Tibial artery (tissue), 4 donors: ENCODE measurements at regions of chr14 and their contacts with region 1.

Region 1: DNA sequence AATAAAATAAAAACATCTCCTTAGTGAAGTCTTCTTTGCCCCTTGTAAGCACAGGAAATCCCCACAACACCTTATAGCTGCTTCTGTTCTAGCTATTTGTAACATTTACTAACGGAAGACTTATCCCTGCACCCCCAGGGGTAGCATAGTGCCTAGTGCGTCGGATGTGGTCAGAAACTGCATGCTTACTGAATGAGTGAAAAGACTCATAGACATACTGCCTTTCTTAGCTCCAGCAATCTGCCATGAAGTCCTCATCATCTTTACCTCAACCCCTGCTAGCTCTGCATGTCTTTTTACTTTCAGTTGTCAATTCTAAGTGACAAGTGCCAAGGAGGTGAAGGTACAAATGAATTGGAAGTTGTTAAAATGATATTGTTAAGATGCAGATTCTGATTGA is 12.9 kb downstream of the RIOX1 start:
- DNase-seq: no peak
- H3K4me3 ChIP-seq: no peak overlapping the region
- H3K27ac ChIP-seq: no peak overlapping the region
- H3K4me1 ChIP-seq: no peaks in the 10 kb centered on the region
- H3K27me3 ChIP-seq: no peaks in the 10 kb centered on the region
- CTCF ChIP-seq: no peak

Region 2: DNA sequence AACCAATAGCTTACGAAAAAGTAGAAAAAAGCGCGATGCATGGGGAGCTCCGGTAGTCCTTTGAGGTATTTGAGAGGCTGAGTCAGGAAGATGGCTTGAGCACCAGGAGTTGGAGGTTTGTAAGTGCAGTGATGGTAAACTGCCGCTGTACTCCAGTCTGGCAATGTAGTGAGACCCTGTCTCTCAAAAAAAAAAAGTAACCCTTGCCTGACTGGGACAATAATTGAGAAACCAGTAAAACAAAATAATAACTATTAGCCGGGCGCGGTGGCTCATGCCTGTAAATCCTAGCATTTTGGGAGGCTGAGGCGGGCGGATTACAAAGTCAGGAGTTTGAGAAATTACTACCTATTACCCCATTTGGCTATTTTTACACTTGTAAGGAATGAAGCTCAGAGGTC is 64.7 kb after region 1 on chr14:
- intact Hi-C with region 1: loop called (anchors 5 kb)
- DNase-seq: no peak
- H3K4me3 ChIP-seq: peak overlapping the region; percentile 61 to 67
- H3K27ac ChIP-seq: peak overlapping the region; percentile 86 to 99
- H3K4me1 ChIP-seq: peaks cover 0 to 36% (median 15%) of the 10 kb centered on the region in 4 donors
- H3K27me3 ChIP-seq: no peaks in the 10 kb centered on the region
- CTCF ChIP-seq: no peak

Region 3: GRCh38 chr14:73633116-73634010 is 129.7 kb after region 1 on chr14:
- intact Hi-C with region 1: loop called (anchors 2 kb)
- DNase-seq: peak; percentile 41 to 81
- H3K4me3 ChIP-seq: peak overlapping the region; percentile 55 to 78
- H3K27ac ChIP-seq: peak overlapping the region; percentile 61 to 63
- H3K4me1 ChIP-seq: peaks cover 0 to 13% (median 4%) of the 10 kb centered on the region in 4 donors
- H3K27me3 ChIP-seq: no peaks in the 10 kb centered on the region
- CTCF ChIP-seq: peak; percentile 80 to 84